Activated T-helper 1 cell treated with anti-CD3 and anti-CD28 coated beads, Interleukin-12 subunit alpha, Interleukin-12 subunit beta, Interleukin-2, Interleukin-4 antibody, amounts not matched to agents 30 ng/mL and 10 ng/mL and 1 ng/mL, durations not matched to agents 14 hours and 24 hours and 36 hours (primary cell): ENCODE measurements at regions of chr12 and their contacts with region 1.

Region 1: DNA sequence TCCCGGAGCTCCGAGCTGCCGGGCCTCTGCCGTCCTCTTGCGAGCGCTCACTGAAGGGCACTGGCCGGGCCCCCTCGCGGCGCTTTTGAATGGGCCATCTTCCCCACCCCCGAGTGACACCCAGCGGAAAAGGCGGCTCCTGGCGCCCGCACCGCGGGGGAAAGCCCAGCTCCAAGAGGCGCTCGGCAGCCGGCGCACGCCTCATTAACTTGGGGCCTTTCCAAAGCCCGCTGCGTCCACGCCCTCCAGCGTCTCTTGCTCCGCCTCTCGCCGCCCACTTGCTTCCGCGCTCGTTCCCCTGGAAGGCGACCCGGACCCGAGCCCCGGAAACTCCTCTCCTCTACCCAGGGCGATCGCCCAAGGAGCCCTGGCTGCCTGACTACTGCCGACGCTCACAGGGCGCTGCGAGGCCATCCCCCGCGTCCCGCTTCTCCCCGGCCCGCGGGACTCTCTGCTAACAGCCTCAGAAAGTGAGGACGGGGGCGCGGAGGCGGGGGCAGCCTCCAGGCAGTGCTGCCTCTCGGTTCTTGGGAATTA is at the start of gene PHLDA1:
- DNase-seq: peak; percentile 95
- H3K4me3 Mint-ChIP-seq: peak within 1 kb of the TSS; percentile 99
- H3K27ac Mint-ChIP-seq: peak within 1 kb of the TSS; percentile 99
- H3K4me1 Mint-ChIP-seq: peaks cover 34% of the 10 kb centered on the region
- H3K27me3 Mint-ChIP-seq: peaks cover 3% of the 10 kb centered on the region
- total RNA-seq, gene PHLDA1: 88.9 and 91.5 TPM in 2 replicates

Region 2: DNA sequence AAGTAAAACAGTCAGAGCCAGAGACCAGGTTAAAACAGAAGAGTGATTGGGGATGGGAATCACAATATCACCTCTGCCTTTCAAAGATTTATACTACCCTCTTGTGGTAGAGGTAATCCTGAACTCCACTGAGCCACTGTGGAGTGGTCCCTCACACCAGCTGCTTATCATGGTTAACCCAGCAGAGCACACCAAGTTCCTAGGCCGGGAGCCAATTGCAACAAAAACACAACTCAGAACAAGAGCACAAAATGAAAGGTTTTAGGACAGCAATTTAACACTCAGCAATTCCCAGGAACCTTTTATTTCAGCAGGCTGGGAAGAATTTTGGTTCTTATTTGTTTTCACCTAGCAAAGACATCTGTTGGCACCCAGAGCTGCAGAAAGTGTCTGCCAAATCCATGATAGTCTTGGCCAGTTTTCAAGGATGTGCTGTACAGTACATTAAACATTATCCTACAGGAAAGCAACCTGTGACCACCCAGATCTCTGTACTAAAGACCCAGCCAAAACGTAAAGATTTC is 1714.5 kb before region 1 on chr12:
- intact Hi-C with region 1: no loop called
- DNase-seq: no peak
- H3K4me3 Mint-ChIP-seq: no peak overlapping the region
- H3K27ac Mint-ChIP-seq: no peak overlapping the region
- H3K4me1 Mint-ChIP-seq: no peaks in the 10 kb centered on the region
- H3K27me3 Mint-ChIP-seq: no peaks in the 10 kb centered on the region

Region 3: GRCh38 chr12:75390899-75391538 is 640.6 kb before region 1 on chr12 and contains the start of gene GLIPR1L2:
- intact Hi-C with region 1: loop called (anchors 2 kb)
- DNase-seq: peak; percentile 82
- H3K4me3 Mint-ChIP-seq: peak within 1 kb of the TSS; percentile 86
- H3K27ac Mint-ChIP-seq: peak within 1 kb of the TSS; percentile 79
- H3K4me1 Mint-ChIP-seq: peaks cover 39% of the 10 kb centered on the region
- H3K27me3 Mint-ChIP-seq: peaks cover 5% of the 10 kb centered on the region
- total RNA-seq, gene GLIPR1L2: not detected in 2 replicates

Region 4: DNA sequence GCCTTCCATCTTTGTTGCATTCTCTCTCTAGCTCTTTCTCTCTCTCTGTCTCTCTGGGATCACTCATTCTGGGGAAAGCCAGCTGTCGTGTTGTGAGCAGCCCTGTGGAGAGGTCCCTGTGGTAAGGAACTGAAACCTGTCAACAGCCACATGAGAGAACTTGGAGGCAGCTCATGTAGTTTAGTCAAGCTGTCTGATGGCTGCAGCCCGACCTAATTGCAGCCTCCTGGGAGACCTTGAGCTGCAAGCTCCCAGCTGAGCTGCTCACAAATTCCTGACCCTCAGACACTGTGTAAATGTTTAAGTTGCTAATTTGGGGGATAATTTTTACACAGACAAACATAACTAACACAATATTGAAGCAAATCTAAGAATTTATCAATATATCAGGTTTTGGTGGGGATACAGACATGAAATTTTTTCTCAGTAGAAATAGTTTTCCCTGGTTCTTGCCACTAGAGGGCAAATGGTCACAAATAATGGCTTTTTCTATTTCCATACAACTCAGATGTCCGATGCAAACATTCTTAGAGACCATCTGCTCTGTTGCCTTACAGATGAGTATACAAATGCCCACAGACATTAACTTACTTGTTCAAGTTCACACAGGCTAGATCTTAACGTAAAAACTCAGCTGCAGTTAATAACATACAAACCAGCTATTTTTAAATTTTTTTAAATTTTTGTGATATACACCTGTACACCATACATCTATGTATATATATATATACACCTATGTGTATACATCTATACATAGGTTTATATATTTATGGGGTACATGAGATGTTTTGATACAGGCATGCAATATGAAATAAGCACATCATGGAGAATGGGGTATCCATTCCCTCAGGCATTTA is 504.7 kb before region 1 on chr12:
- intact Hi-C with region 1: no loop called
- DNase-seq: peak; percentile 9
- H3K4me3 Mint-ChIP-seq: no peak overlapping the region
- H3K27ac Mint-ChIP-seq: no peak overlapping the region
- H3K4me1 Mint-ChIP-seq: peaks cover 15% of the 10 kb centered on the region
- H3K27me3 Mint-ChIP-seq: peaks cover 35% of the 10 kb centered on the region

Region 5: GRCh38 chr12:75641031-75641780 is 390.4 kb before region 1 on chr12:
- intact Hi-C with region 1: loop called (anchors 1 kb)
- DNase-seq: peak; percentile 32
- H3K4me3 Mint-ChIP-seq: peak overlapping the region; percentile 19
- H3K27ac Mint-ChIP-seq: peak overlapping the region; percentile 89
- H3K4me1 Mint-ChIP-seq: peaks cover 34% of the 10 kb centered on the region
- H3K27me3 Mint-ChIP-seq: no peaks in the 10 kb centered on the region

Region 6: GRCh38 chr12:75913502-75914351 is 117.9 kb before region 1 on chr12:
- intact Hi-C with region 1: loop called (anchors 1 kb)
- DNase-seq: no peak
- H3K4me3 Mint-ChIP-seq: no peak overlapping the region
- H3K27ac Mint-ChIP-seq: peak overlapping the region; percentile 79
- H3K4me1 Mint-ChIP-seq: peaks cover 34% of the 10 kb centered on the region
- H3K27me3 Mint-ChIP-seq: peaks cover 1% of the 10 kb centered on the region

Region 7: DNA sequence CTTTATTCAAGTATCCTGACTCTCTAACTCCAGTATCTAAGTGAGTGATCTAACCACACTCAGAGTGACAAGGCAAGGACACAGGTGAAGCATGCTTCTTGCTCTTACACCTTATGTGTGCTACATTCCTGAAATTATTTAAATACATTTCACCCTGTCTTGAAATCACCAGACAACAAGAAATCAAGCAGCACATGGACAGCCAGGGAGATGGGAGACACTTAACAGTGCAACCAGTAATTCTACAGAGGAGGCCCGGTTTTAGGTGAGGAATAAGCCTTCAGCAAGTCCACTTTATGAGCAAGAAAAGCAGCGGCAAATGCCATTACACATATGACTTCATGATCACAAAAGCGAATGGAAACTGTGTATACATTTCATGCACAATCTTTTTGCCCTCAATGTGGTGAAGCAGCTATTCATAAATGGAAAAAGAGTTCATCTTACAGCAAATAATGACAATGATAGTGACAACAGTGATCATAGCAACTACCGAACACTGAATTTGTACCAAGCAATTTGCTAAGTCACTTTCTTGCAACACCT is 37.3 kb before region 1 on chr12:
- intact Hi-C with region 1: loop called (anchors 1 kb)
- DNase-seq: no peak
- H3K4me3 Mint-ChIP-seq: peak overlapping the region; percentile 5
- H3K27ac Mint-ChIP-seq: peak overlapping the region; percentile 88
- H3K4me1 Mint-ChIP-seq: peaks cover 49% of the 10 kb centered on the region
- H3K27me3 Mint-ChIP-seq: no peaks in the 10 kb centered on the region

Region 8: GRCh38 chr12:76144245-76144549 is 112.6 kb after region 1 on chr12:
- intact Hi-C with region 1: no loop called
- DNase-seq: no peak
- H3K4me3 Mint-ChIP-seq: no peak overlapping the region
- H3K27ac Mint-ChIP-seq: no peak overlapping the region
- H3K4me1 Mint-ChIP-seq: peaks cover 18% of the 10 kb centered on the region
- H3K27me3 Mint-ChIP-seq: peaks cover 8% of the 10 kb centered on the region

Region 9: DNA sequence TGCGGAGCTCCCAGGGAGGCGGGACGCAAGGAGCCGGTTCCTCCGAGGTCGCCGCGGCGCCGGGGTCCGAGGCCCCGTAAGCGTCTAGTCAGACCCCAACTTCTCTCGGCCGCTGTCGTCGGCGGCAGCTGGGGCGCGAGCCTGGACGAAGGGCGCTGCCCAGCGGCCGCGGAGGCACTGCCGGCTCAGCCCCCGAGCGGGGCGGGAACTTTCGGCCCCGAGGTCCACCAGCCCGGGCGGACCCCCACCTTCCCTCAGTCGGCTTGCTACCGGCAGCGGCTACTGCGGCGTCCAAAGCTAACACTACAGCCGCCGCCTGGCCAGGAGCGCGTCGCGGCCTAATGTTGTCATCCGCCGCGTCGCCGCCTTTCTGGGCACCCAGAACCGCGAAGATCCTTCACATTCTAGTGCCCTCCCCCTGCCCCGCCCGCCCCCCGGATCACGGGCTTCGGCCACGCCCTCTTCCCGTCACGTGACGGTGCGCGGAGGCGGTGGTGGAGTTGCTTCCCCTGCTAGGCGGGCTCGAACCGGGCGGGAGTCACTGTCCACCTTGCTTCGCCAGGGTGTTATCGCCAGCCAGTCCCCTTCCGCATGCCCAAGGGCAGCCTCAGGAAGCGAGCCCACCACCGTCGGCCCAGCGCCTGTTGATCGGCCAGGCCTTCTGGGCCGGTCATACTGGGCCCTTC is 527.9 kb after region 1 on chr12 and contains the start of gene OSBPL8:
- intact Hi-C with region 1: loop called (anchors 1 kb)
- DNase-seq: peak; percentile 91
- H3K4me3 Mint-ChIP-seq: peak within 1 kb of the TSS; percentile 94
- H3K27ac Mint-ChIP-seq: peak within 1 kb of the TSS; percentile 98
- H3K4me1 Mint-ChIP-seq: peaks cover 49% of the 10 kb centered on the region
- H3K27me3 Mint-ChIP-seq: no peaks in the 10 kb centered on the region
- total RNA-seq, gene OSBPL8: 86.9 and 95.9 TPM in 2 replicates